CD14-positive monocyte (primary cell): ENCODE measurements at regions of chr3 and their contacts with region 1.

Region 1: GRCh38 chr3:149442851-149443544 is 31.5 kb upstream of the TM4SF4 start:
- DNase-seq: peak; percentile 12 to 58 (median 46)
- H3K4me3 ChIP-seq: peak overlapping the region in 1 of 3 experiments; percentile 43
- H3K4me3 Mint-ChIP-seq: peak overlapping the region in 1 of 2 donors; percentile 68
- H3K27ac ChIP-seq: peak overlapping the region in 1 of 2 donors; percentile 52
- H3K27ac Mint-ChIP-seq: peak overlapping the region; percentile 19 to 69 (median 51)
- H3K4me1 ChIP-seq: peaks cover 29 to 47% of the 10 kb centered on the region in 2 donors
- H3K4me1 Mint-ChIP-seq: peaks cover 46% of the 10 kb centered on the region
- H3K27me3 ChIP-seq: no peaks in the 10 kb centered on the region
- H3K27me3 Mint-ChIP-seq: no peaks in the 10 kb centered on the region
- CTCF ChIP-seq: no peak

Region 2: GRCh38 chr3:148344522-148344921 is 1098.5 kb before region 1 on chr3:
- intact Hi-C with region 1: no loop called
- DNase-seq: no peak
- H3K4me3 ChIP-seq: no peak overlapping the region
- H3K4me3 Mint-ChIP-seq: no peak overlapping the region
- H3K27ac ChIP-seq: no peak overlapping the region
- H3K27ac Mint-ChIP-seq: no peak overlapping the region
- H3K4me1 ChIP-seq: no peaks in the 10 kb centered on the region
- H3K4me1 Mint-ChIP-seq: no peaks in the 10 kb centered on the region
- H3K27me3 ChIP-seq: no peaks in the 10 kb centered on the region
- H3K27me3 Mint-ChIP-seq: no peaks in the 10 kb centered on the region
- CTCF ChIP-seq: no peak

Region 3: DNA sequence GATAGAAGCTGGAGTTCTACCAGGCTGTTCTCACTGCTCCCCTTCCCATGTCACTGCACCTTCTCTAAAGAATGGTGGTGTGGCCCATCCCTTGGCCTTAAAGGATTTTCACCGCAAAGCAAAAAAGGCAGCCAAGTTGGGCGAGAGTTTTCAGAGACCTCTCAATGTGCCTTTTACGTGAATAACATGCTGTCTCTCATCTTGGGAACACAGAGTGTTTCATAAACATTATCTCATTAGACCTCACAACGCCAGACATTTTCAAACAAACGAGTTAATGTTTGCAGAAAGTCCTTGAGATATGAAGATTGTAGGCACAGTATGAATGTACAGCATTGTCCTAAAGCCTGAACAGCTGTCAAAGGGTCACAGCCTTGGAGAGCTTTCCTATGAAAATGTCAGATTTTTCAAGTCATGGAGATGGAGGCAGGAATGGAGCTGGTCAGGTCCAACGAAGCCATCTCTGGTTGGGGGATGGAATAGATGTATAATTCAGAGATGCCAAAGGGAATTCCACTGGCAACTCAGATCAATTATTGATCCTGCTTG is 86.9 kb before region 1 on chr3:
- intact Hi-C with region 1: no loop called
- DNase-seq: no peak
- H3K4me3 ChIP-seq: no peak overlapping the region
- H3K4me3 Mint-ChIP-seq: no peak overlapping the region
- H3K27ac ChIP-seq: no peak overlapping the region
- H3K27ac Mint-ChIP-seq: no peak overlapping the region
- H3K4me1 ChIP-seq: no peaks in the 10 kb centered on the region
- H3K4me1 Mint-ChIP-seq: peaks cover 2% of the 10 kb centered on the region
- H3K27me3 ChIP-seq: no peaks in the 10 kb centered on the region
- H3K27me3 Mint-ChIP-seq: no peaks in the 10 kb centered on the region
- CTCF ChIP-seq: no peak

Region 4: DNA sequence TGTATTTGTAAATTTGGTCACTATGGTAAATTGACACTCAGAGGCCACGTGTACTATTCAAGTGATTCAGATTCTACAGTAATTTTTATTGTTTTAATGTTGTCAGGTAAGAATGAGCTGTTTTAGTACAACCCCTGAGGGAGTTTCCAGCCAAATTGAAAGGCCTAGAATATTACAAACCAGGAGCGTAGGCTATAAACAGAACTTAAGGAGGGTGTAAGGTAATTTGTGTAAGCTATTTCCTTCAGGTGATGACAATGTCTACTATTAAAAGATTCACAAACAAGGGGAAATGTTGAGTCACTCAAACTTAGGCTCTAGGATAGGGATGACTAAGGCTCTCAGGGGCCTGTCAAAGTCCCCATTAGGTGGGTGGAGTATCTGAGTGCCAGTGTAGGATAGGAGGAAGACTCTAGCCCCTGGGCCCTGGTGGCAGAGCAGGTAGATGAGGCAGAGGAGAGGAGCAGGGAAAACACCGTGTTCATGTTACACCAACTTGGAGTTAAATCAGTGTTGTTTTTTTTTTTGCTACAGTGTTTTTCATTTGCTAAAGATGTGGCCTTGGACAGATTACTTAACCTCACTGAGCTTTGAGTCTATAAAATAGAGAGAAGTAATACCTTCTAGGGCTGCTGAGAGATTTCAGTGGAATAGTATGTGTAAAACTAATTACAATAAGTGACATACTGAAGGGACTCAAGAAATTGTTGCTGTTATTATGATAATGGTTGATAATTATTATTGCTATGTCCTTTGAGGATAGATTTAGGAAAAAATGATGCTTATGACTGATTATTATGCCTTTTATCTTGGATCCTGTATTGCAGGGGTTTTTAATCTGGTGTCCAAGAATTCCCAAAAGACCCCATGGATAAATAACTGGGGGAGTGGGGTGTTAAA is 75.8 kb before region 1 on chr3:
- intact Hi-C with region 1: no loop called
- DNase-seq: peak in 1 of 3 donors; percentile 36
- H3K4me3 ChIP-seq: no peak overlapping the region
- H3K4me3 Mint-ChIP-seq: no peak overlapping the region
- H3K27ac ChIP-seq: no peak overlapping the region
- H3K27ac Mint-ChIP-seq: no peak overlapping the region
- H3K4me1 ChIP-seq: peaks cover 19 to 21% of the 10 kb centered on the region in 2 donors
- H3K4me1 Mint-ChIP-seq: peaks cover 24% of the 10 kb centered on the region
- H3K27me3 ChIP-seq: no peaks in the 10 kb centered on the region
- H3K27me3 Mint-ChIP-seq: peaks cover 0 to 2% (median 1%) of the 10 kb centered on the region in 3 donors
- CTCF ChIP-seq: no peak

Region 5: GRCh38 chr3:149393345-149394160 is 49.4 kb before region 1 on chr3:
- intact Hi-C with region 1: loop called in 1 of 2 experiments (anchors 10 kb)
- DNase-seq: peak; percentile 65 to 78 (median 71)
- H3K4me3 ChIP-seq: peak overlapping the region in 1 of 3 experiments; percentile 33
- H3K4me3 Mint-ChIP-seq: peak overlapping the region in 1 of 2 donors; percentile 40
- H3K27ac ChIP-seq: peak overlapping the region in 1 of 2 donors; percentile 69
- H3K27ac Mint-ChIP-seq: peak overlapping the region; percentile 73 to 97 (median 92)
- H3K4me1 ChIP-seq: peaks cover 10 to 14% of the 10 kb centered on the region in 2 donors
- H3K4me1 Mint-ChIP-seq: peaks cover 11% of the 10 kb centered on the region
- H3K27me3 ChIP-seq: no peaks in the 10 kb centered on the region
- H3K27me3 Mint-ChIP-seq: peaks cover 0 to 2% (median 1%) of the 10 kb centered on the region in 3 donors
- CTCF ChIP-seq: peak; percentile 89

Region 6: GRCh38 chr3:149494022-149494758 is 51.2 kb after region 1 on chr3:
- intact Hi-C with region 1: loop called in 1 of 2 experiments (anchors 10 kb)
- DNase-seq: peak; percentile 49 to 66 (median 64)
- H3K4me3 ChIP-seq: no peak overlapping the region
- H3K4me3 Mint-ChIP-seq: no peak overlapping the region
- H3K27ac ChIP-seq: no peak overlapping the region
- H3K27ac Mint-ChIP-seq: no peak overlapping the region
- H3K4me1 ChIP-seq: peaks cover 7 to 10% of the 10 kb centered on the region in 2 donors
- H3K4me1 Mint-ChIP-seq: peaks cover 21% of the 10 kb centered on the region
- H3K27me3 ChIP-seq: peaks cover 6 to 10% of the 10 kb centered on the region in 2 donors
- H3K27me3 Mint-ChIP-seq: peaks cover 9 to 20% (median 11%) of the 10 kb centered on the region in 3 donors
- CTCF ChIP-seq: peak; percentile 89

Region 7: GRCh38 chr3:149553781-149554451 is 110.9 kb after region 1 on chr3:
- intact Hi-C with region 1: no loop called
- DNase-seq: no peak
- H3K4me3 ChIP-seq: no peak overlapping the region
- H3K4me3 Mint-ChIP-seq: peak overlapping the region in 1 of 2 donors; percentile 2
- H3K27ac ChIP-seq: no peak overlapping the region
- H3K27ac Mint-ChIP-seq: no peak overlapping the region
- H3K4me1 ChIP-seq: no peaks in the 10 kb centered on the region
- H3K4me1 Mint-ChIP-seq: no peaks in the 10 kb centered on the region
- H3K27me3 ChIP-seq: peaks cover 12 to 40% of the 10 kb centered on the region in 2 donors
- H3K27me3 Mint-ChIP-seq: peaks cover 12 to 45% (median 21%) of the 10 kb centered on the region in 3 donors
- CTCF ChIP-seq: no peak